ENCODE measurements at regions of chrX and their contacts with region 1.

Region 1: GRCh38 chrX:65601530-65602220 is 65.8 kb upstream of the MSN start:
- DNase-seq: peak; percentile 92
- ATAC-seq: peak; percentile 96 to 97

Region 2: DNA sequence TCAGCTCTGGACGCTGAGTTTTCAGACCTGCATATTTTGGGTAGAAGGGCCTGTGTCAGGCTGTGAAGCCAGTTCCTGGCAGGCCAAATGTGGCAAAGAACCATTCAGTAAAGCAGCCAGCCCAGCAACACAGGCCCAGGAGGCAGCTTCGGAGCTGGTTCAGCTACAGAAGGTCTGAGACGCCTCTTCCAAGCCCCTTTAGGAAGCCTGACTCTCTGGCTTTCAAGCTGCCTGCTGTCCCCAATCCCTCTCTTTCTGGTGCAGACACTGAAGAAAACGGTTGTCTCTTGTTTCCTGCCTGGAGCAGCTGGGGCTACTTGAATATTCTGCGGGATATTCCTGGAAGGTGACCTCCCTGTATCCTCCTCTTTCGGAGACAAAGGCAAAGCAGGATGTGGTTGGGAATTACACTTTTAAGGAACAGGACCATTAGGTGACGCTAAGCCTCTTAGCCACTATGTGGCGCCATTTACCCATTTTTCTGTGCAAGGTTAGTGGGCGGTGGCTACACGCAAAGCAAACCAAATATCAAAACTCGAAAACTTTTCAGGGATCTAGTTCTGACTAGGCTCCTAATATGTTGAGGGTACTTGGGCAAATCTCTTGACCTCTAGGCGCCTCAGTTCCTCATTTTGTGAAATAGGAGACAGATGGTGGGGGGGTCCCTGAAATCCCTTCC is 19.9 kb before region 1 on chrX:
- intact Hi-C with region 1: no loop called
- DNase-seq: peak; percentile 54
- ATAC-seq: peak; percentile 84

Region 3: DNA sequence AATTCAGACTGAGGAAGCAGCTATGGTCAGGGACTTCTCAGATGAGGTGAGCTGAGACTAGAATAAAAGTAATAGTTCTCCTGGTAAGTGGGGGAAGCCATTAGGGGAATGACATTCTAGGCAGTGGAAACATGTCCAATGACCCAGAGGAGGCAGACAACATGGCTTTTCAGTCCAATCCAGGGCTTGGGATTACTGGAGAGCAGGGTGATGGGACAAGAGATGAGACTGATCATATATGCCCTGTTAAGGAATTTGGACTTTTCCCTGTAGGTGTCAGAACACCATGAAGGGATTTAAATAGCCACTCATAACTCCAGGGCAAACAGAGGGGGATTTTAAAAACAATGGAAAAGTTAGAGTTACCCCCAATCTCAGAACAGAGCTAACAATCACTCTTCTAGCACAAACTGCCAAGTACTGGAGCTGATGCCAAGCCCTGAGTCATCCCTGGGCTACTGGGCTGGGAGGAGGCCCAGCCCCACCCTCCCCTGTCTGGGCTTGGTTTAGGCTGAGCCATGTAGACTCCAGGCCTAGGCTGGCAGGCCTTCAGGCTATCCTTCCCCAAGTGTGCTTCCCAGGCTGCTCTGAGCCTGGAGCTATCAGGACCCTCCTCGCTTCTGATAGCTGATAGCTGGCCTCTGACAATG is 43.1 kb after region 1 on chrX:
- intact Hi-C with region 1: loop called in 1 of 2 experiments (anchors 5 kb)
- DNase-seq: peak; percentile 93
- ATAC-seq: peak; percentile 99

Region 4: DNA sequence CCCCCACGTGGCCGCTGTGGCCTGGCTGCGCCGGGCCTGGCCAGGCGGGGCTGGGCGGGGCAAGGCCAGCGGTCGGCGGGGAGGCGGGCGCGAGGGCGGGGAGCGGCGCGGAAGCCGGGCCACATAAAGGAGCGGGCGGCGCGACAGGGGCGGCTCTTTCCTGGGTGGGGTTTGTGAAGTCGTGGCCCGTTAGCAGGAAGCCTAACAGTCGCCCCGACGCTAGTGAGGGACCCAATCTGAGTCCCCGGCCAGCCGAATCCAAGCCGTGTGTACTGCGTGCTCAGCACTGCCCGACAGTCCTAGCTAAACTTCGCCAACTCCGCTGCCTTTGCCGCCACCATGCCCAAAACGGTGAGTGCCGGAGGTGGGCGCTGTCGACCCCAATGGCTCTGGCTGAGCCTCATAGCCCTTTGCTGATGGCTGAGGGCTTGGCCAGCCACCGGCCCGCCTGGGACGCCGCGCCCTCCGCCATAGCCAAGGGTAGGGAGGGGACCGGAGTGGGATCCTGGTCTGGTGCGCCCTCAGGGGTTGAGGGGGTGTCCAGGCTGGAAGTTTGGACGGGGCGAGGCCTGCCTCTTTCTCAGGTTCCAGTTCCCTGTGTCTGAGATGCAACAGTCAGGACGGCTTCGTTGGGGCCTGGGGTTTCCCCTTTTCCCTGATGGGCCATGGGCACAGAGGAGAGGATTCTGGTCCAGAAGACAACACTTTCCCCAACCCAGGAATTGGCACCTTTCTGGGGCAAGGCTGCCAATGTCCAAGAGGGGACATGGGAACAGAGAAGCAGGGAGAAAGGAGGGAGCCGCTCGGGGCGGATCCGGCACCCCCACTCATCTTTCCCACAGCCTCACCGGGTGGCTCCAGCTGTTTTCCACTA is 66.1 kb after region 1 on chrX and contains the start of gene MSN:
- intact Hi-C with region 1: loop called in 1 of 2 experiments (anchors 5 kb)
- DNase-seq: peak; percentile 85
- ATAC-seq: peak; percentile 93
- total RNA-seq, gene MSN: 139 to 245 TPM

Region 5: DNA sequence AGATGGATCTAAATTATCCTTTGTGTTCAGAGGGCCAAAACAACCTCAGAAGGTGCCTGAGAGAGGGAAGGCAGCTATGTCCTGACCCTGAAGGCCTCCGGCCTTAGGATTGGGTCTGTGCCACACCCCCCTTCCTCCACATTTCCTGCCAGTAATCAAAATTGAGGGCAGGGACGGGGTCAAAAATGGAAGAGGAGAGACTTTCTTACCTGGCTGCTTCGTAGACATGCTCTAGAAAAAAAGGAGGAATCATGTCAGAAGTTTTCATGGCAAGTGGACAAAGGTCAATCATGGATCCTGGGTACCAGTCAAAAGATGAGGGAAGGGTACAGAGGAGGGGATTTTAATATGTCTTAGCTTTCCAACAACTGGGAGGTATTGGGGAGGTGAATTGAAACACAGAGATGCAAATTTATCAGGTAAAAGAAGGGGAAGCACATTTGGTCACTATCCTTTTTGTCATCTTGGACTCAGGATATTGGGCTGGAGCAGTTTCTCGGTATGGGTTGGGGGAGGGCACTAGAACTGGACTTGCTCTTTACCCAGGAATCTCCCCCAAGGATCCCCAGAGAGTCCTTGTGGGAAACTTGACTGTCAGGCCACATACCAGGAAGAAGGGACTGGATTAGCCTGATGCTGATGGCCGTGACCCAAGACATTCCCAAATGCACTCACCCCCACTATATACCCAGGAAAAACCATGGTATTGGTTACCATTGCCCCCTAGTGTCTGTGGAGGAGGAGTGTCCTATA is 421.1 kb after region 1 on chrX:
- intact Hi-C with region 1: no loop called
- DNase-seq: no peak
- ATAC-seq: no peak